ENCODE measurements at regions of chr6 and their contacts with region 1.

Region 1: DNA sequence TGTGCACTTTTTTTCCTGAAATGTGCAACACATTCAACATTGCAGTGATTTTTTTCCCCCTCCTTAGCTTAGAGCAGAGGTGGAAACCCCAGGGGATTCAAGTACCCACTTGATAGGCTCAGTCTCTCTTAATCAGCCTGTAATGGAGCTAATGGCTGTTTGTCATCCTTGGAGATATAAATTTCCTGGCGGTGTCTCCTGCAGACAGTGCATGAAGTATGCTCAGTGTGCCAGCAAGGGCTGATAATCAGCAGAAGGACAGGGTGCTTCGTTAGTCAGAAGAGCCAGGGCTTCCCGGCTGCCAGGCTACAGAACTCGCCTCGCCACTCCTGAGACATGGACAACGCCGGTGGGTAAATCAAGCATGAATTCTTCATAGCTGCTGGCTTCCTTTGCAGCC is 69.8 kb upstream of the PHACTR2 start:
- DNase-seq: no peak
- ATAC-seq: peak in 2 of 4 donors; percentile 13 to 18
- H3K4me3 ChIP-seq: no peak overlapping the region
- H3K27ac ChIP-seq: no peak overlapping the region
- H3K4me1 ChIP-seq: no peaks in the 10 kb centered on the region
- H3K27me3 ChIP-seq: no peaks in the 10 kb centered on the region
- CTCF ChIP-seq: no peak
- POLR2A ChIP-seq: no peak

Region 2: GRCh38 chr6:143677891-143678791 is 70.2 kb after region 1 on chr6 and contains the start of gene PHACTR2:
- intact Hi-C with region 1: loop called in 1 of 2 experiments (anchors 10 kb)
- DNase-seq: peak; percentile 84 to 87 (median 84)
- ATAC-seq: peak; percentile 88 to 95 (median 92)
- H3K4me3 ChIP-seq: peak within 1 kb of the TSS; percentile 78 to 82 (median 80)
- H3K27ac ChIP-seq: peak within 1 kb of the TSS; percentile 84 to 95 (median 89)
- H3K4me1 ChIP-seq: peaks cover 0 to 37% (median 0%) of the 10 kb centered on the region in 4 donors
- H3K27me3 ChIP-seq: no peaks in the 10 kb centered on the region
- CTCF ChIP-seq: no peak
- POLR2A ChIP-seq: peak; percentile 82
- total RNA-seq, gene PHACTR2: 14.0 to 62.7 (median 20.9) TPM

Region 3: GRCh38 chr6:143708889-143709288 is 100.9 kb after region 1 on chr6:
- intact Hi-C with region 1: no loop called
- DNase-seq: no peak
- ATAC-seq: peak in 2 of 4 donors; percentile 24 to 55
- H3K4me3 ChIP-seq: no peak overlapping the region
- H3K27ac ChIP-seq: no peak overlapping the region
- H3K4me1 ChIP-seq: no peaks in the 10 kb centered on the region
- H3K27me3 ChIP-seq: no peaks in the 10 kb centered on the region
- CTCF ChIP-seq: no peak
- POLR2A ChIP-seq: no peak

Region 4: DNA sequence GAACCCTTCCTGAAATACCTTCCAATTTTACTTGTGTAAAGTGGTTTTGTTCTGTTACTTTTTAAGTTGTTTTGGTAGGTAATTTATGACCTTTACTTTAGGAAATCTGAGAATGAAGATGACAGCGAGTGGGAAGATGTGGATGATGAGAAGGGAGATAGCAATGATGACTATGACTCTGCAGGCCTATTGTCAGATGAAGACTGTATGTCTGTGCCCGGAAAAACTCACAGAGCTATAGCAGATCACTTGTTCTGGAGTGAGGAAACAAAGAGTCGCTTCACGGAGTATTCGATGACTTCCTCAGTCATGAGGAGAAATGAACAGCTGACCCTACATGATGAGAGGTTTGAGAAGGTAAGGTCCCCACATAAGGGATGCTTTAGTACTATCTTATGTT is 249.7 kb after region 1 on chr6:
- intact Hi-C with region 1: no loop called
- DNase-seq: no peak
- ATAC-seq: no peak
- H3K4me3 ChIP-seq: no peak overlapping the region
- H3K27ac ChIP-seq: no peak overlapping the region
- H3K4me1 ChIP-seq: no peaks in the 10 kb centered on the region
- H3K27me3 ChIP-seq: no peaks in the 10 kb centered on the region
- CTCF ChIP-seq: no peak
- POLR2A ChIP-seq: no peak

Region 5: GRCh38 chr6:143934867-143935266 is 326.9 kb after region 1 on chr6:
- intact Hi-C with region 1: no loop called
- DNase-seq: no peak
- ATAC-seq: no peak
- H3K4me3 ChIP-seq: no peak overlapping the region
- H3K27ac ChIP-seq: no peak overlapping the region
- H3K4me1 ChIP-seq: peaks cover 0 to 2% (median 0%) of the 10 kb centered on the region in 4 donors
- H3K27me3 ChIP-seq: no peaks in the 10 kb centered on the region
- CTCF ChIP-seq: no peak
- POLR2A ChIP-seq: no peak

Measured in right lobe of liver (tissue), 6 donors.